ENCODE measurements at regions of chr17 and their contacts with region 1.

Region 1: DNA sequence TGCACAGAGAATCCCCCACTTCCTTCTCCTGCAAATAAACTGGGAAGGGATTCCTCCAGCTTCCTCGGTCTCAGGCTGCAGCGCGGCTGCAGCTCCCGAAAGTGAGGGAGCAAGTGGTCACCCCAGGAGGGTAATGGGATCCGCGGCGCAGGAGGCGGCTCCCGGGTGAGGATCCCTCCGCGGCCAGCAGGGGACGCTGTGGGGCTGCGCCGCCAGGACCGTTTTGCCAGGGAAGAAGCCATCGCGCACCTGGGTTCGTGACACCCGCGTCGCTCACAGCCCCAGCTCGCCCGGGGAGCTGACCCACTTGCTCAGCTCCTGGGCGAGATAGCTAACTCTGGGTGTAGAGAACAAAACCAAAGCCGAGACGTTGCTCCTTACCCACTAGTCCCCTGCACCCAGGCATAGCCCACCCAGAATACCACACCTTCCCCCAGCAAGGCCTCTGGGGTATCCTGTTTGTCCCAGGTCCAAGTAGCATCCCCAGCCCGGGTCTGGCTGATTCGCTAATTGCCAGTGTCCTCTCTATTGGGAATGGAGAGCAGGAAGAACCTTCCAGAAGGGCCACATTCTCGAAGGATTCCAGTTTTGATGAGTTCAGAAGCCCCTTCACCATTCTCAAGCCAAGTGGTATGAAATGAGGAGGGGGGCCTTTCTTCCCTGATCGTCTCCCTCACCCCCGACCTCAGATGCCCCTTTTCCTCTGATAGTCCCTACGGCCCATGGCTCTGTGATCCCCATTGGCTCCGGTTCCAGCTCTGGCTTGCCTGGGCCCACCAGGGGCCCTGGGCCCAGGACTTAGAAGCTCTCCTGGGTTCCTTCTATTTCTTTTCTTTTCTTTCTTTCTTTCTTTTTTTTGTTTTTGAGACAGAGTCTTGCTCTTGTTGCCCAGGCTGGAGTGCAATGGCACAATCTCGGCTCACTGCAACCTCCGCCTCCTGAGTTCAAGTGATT is 14.1 kb downstream of the CYGB start:
- DNase-seq: peak; percentile 76 to 90
- ATAC-seq: peak; percentile 83 to 92 (median 87)
- H3K4me3 ChIP-seq: no peak overlapping the region
- H3K27ac ChIP-seq: no peak overlapping the region
- H3K4me1 ChIP-seq: peaks cover 12% of the 10 kb centered on the region
- H3K27me3 ChIP-seq: peaks cover 0 to 1% (median 0%) of the 10 kb centered on the region in 3 donors
- CTCF ChIP-seq: peak; percentile 100

Region 2: DNA sequence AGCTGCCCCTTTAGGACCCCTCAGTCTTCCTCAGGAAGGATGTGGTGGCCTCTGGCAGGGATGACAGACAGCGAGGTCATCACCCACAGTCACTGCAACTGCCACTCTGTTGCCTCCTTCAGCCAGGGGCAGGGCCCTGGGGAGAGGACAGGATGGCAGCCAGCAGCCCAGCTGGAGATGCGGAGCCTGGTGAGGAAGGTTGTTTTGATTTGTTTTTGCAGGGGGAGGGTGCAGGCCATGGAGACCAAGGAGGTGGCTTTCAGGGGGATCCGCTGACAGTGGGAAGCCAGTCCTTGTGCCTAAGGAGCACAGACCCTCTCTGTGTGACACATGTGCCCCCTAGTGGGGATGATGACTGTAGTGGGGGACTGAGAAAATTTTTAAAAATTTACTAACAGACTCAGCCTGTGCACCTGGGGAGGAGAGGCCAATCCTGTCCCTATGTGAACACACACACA is 23.9 kb after region 1 on chr17:
- intact Hi-C with region 1: loop called in 1 of 2 experiments (anchors 1 kb)
- DNase-seq: peak in 1 of 2 donors; percentile 40
- ATAC-seq: peak; percentile 74 to 80 (median 78)
- H3K4me3 ChIP-seq: no peak overlapping the region
- H3K27ac ChIP-seq: no peak overlapping the region
- H3K4me1 ChIP-seq: peaks cover 49% of the 10 kb centered on the region
- H3K27me3 ChIP-seq: no peaks in the 10 kb centered on the region
- CTCF ChIP-seq: peak; percentile 66

Region 3: GRCh38 chr17:76623271-76624146 is 100.1 kb after region 1 on chr17:
- intact Hi-C with region 1: loop called (anchors 1 to 5 kb)
- DNase-seq: peak; percentile 78 to 86
- ATAC-seq: peak; percentile 86 to 99 (median 94)
- H3K4me3 ChIP-seq: no peak overlapping the region
- H3K27ac ChIP-seq: no peak overlapping the region
- H3K4me1 ChIP-seq: peaks cover 4% of the 10 kb centered on the region
- H3K27me3 ChIP-seq: no peaks in the 10 kb centered on the region
- CTCF ChIP-seq: peak; percentile 95

Measured in psoas muscle (tissue), 8 donors.